Posterior cingulate gyrus (tissue), 11 donors: ENCODE measurements at regions of chr18 and their contacts with region 1.

Region 1: DNA sequence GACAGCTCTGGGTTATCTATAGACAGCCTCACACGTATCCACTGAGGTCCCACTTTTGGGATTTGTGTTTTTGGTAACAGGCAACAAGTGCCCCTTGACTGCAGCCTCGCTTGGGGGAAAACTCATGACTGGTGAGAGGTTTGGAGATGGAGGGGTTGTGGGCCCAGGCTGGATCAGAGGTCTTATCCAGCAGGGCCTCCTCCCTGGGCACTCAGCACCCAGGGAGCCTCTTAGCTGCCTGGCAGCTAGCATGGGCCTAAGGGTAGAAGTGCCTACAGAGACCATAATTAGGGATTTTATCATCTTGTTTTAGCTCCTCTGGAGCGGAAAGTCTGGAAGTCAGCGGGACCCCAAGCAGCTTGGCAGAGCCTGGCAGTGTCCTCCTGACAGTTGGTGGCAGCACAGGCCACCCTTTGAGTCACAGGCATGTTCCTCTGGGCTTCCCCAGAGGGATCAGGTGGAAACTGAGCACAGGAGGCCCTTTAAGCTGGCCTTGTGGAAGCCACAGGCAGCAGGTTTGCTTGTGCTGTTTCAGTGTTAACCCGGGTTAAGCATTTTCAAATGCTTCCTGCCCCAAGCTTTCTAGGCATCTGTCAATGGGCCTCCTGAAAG is 143.1 kb downstream of the KCTD1 start:
- DNase-seq: peak in 9 of 10 donors; percentile 30 to 94 (median 61)

Region 2: DNA sequence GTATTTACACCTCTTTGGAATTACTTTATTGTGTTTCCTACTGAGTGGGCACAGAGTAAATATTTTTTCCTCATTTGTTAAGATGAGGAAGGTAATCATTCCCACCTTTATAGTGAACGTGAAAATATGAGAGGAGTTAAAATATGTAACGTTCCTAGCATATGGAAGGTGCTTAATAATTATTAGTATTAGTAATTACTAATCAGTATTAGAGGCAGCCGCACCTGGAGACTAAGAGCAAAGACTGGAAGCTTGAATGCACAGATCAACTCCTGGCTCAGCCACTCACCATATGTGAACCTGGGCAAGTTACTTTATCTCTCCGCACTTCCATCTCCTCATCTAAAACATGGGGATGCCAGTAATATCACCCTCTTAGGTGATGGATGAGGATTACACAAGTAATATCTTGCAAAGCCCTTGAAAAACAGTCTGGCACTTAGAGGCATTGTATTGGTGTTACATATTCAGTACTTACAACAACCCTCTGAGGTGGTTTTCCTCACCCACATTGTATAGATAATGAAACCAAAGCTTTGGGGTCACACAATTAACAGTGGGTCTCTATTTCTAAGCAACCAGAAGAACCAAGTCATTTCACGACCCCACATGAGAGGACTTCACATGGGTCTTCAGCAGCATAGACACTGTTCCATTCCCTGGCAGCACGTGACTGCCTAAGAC is 243.4 kb after region 1 on chr18:
- intact Hi-C with region 1: loop called (anchors 2 kb)
- DNase-seq: no peak

Region 3: GRCh38 chr18:26941584-26941983 is 536.3 kb after region 1 on chr18:
- intact Hi-C with region 1: no loop called
- DNase-seq: no peak